ENCODE measurements at regions of chr7 and their contacts with region 1.

Region 1: DNA sequence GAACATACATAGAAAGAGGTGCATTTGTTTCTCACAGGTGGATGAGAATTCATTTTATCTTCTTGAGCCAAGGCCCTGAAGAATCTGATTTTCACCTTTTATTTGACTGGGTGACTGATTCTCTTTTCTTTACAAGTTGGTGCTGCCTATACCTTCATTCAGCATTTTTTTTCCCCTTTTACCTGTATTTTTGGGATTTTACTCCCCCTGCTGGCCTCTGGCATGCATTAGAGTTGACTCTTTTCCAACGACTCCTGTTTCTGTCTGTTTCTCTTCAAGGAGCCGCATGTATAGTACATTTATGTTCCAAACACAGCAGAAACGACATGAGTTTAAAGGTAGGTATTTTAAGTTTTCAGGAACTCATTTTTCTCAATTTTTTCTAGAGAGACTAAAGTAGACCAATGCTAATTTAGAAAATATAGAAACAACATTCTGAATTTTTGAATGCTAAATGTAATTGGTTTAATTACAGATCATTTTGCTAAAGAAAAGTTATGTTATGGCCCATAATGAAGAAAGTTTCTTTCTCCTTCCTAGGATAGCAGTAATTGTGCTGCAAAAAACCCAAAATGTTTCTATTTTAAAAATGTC is 149.8 kb upstream of the HDAC9 start:
- DNase-seq: peak in 1 of 2 donors; percentile 14
- ATAC-seq: peak in 1 of 8 donors; percentile 39
- H3K4me3 ChIP-seq: no peak overlapping the region
- H3K27ac ChIP-seq: no peak overlapping the region
- H3K4me1 ChIP-seq: no peaks in the 10 kb centered on the region
- H3K27me3 ChIP-seq: no peaks in the 10 kb centered on the region
- CTCF ChIP-seq: peak; percentile 61 to 81 (median 79)

Region 2: GRCh38 chr7:17690030-17690429 is 655.7 kb before region 1 on chr7:
- intact Hi-C with region 1: loop called in 3 of 10 experiments (anchors 10 kb)
- DNase-seq: no peak
- ATAC-seq: peak in 2 of 8 donors; percentile 11 to 58
- H3K4me3 ChIP-seq: no peak overlapping the region
- H3K27ac ChIP-seq: no peak overlapping the region
- H3K4me1 ChIP-seq: peaks cover 0 to 2% (median 0%) of the 10 kb centered on the region in 9 donors
- H3K27me3 ChIP-seq: no peaks in the 10 kb centered on the region
- CTCF ChIP-seq: no peak

Region 3: DNA sequence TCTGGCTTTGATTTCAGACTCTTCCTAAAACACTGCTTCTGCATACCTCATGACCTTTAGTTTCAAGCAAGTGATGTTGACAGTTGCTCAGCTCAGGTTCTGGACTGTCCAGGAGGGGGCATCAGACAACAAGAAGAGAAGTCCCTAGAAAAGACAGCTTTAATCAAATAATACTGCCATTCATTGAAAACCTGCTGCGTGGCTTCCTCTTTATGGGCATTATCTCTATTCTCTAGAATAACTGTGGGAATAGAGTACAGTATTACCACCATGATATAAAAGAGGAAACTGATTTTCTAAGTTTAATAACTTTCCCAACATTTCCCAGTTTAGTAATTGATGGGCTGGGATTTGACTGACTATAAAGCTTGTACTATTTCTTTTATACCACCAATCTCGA is 575.8 kb before region 1 on chr7:
- intact Hi-C with region 1: loop called in 6 of 10 experiments (anchors 5 to 10 kb)
- DNase-seq: peak in 1 of 2 donors; percentile 58
- ATAC-seq: peak in 6 of 8 donors; percentile 47 to 71 (median 64)
- H3K4me3 ChIP-seq: no peak overlapping the region
- H3K27ac ChIP-seq: no peak overlapping the region
- H3K4me1 ChIP-seq: peaks cover 5 to 42% (median 13%) of the 10 kb centered on the region in 9 donors
- H3K27me3 ChIP-seq: no peaks in the 10 kb centered on the region
- CTCF ChIP-seq: peak; percentile 25 to 79 (median 72)

Region 4: GRCh38 chr7:17971411-17971810 is 374.3 kb before region 1 on chr7:
- intact Hi-C with region 1: loop called in 6 of 10 experiments (anchors 5 to 10 kb)
- DNase-seq: no peak
- ATAC-seq: no peak
- H3K4me3 ChIP-seq: no peak overlapping the region
- H3K27ac ChIP-seq: no peak overlapping the region
- H3K4me1 ChIP-seq: no peaks in the 10 kb centered on the region
- H3K27me3 ChIP-seq: no peaks in the 10 kb centered on the region
- CTCF ChIP-seq: peak in 6 of 9 donors; percentile 22 to 48 (median 39)

Region 5: GRCh38 chr7:18064242-18064838 is 281.4 kb before region 1 on chr7:
- intact Hi-C with region 1: loop called in 4 of 10 experiments (anchors 5 to 10 kb)
- DNase-seq: no peak
- ATAC-seq: peak in 1 of 8 donors; percentile 48
- H3K4me3 ChIP-seq: no peak overlapping the region
- H3K27ac ChIP-seq: no peak overlapping the region
- H3K4me1 ChIP-seq: no peaks in the 10 kb centered on the region
- H3K27me3 ChIP-seq: no peaks in the 10 kb centered on the region
- CTCF ChIP-seq: peak; percentile 35 to 68 (median 60)

Measured in heart right ventricle (tissue), 16 donors.